Activated CD4-positive, alpha-beta memory T cell treated with anti-CD3 and anti-CD28 coated beads, Interleukin-2, amount 10 ng/mL, durations not matched to agents 7 days and 5 days (primary cell): ENCODE measurements at regions of chr11 and their contacts with region 1.

Region 1: GRCh38 chr11:3014057-3014938 is 22.2 kb upstream of the NAP1L4 start:
- DNase-seq: peak; percentile 87
- H3K4me3 Mint-ChIP-seq: peak overlapping the region; percentile 11
- H3K27ac Mint-ChIP-seq: peak overlapping the region; percentile 95
- H3K4me1 Mint-ChIP-seq: peaks cover 84% of the 10 kb centered on the region
- H3K27me3 Mint-ChIP-seq: no peaks in the 10 kb centered on the region

Region 2: GRCh38 chr11:2930704-2931428 is 83.4 kb before region 1 on chr11:
- CTCF ChIA-PET with region 1: interaction called, 12 read pairs
- POLR2A ChIA-PET with region 1: no interaction called
- DNase-seq: peak; percentile 66
- H3K4me3 Mint-ChIP-seq: peak overlapping the region; percentile 73
- H3K27ac Mint-ChIP-seq: peak overlapping the region; percentile 57
- H3K4me1 Mint-ChIP-seq: peaks cover 43% of the 10 kb centered on the region
- H3K27me3 Mint-ChIP-seq: peaks cover 22% of the 10 kb centered on the region

Region 3: DNA sequence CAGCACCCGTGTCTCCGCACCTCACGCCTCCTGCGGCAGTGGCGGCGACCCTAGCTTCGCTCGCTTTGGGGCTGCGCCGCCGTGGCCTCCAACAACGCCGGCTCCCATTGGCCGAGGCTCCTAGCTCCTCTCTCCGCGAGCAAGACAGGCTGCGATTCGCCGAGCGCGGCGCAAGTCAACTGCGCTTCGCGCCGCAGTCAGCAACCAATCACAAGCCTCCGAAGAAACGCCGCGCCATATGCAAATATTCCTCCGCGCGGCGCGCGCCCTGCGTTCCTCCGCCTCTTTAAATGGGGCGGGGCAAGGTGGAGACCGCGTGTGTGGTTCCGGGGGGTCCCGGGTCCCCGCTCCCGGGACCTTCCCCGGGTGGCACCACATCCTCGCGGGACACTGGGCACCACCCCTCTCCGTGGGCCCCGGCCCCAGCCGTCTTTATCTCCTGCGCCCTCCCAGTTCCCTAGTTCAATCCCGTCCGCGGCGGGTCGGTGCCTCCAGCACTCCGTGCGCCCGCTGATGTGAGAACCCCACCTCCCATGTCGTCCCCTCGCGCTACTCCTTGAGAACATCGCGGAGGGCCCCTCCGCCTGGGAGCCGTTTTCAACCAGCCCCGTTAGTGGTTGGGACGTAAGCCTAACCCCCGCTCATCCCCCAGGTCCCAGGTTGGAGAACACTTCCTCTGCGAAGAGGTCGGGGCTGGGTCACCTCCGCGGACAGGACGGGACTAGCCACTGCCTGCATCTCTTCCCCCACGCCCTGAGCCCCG is 21.9 kb before region 1 on chr11 and contains the start of gene NAP1L4:
- CTCF ChIA-PET with region 1: interaction called, 46 read pairs
- POLR2A ChIA-PET with region 1: interaction called, 307 read pairs
- DNase-seq: peak; percentile 97
- H3K4me3 Mint-ChIP-seq: peak within 1 kb of the TSS; percentile 99
- H3K27ac Mint-ChIP-seq: peak within 1 kb of the TSS; percentile 97
- H3K4me1 Mint-ChIP-seq: peaks cover 25% of the 10 kb centered on the region
- H3K27me3 Mint-ChIP-seq: no peaks in the 10 kb centered on the region
- total RNA-seq, gene NAP1L4: 299 to 314 TPM

Region 4: DNA sequence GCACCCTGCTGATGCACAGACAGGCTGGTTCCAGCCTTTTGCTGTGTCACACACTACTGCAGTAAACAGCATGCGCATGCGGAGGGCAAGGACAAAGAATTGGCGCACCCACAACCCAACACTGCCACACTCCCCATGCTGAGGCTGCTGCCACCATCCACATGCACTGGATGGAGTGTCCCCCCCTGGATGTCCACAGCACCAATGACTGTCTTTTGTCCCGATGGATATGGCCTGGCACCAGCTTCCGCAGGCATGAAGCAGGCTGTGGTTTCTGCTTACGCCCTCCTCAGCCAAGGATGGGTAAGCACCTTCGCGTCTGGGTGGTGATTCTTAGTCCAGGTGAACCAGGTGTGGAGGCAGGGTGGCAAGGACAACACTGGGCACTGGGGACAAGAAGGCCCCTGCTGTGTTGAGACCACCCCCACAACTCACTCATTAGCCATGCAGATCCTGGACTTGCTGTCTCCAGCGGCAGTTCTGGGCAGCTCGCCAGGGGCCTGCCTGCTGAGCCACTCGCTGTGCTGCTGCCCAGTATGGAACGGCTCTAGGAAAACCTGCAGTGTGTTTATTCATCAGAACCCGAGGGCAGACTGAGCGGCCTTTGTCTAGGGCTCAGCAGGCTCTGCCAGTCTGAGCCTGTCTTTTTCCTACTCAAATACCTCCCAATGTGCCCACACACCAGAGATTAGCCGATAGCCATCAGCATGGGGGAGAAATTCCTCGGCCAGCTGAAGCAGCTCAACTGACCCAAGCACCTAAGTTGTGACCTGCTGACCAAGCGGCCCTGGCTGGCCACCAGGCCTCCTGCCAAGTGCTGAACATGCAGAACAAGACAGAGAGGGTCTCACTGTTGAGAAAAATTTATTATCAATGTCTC is 14.0 kb before region 1 on chr11:
- CTCF ChIA-PET with region 1: interaction called, 11 read pairs
- POLR2A ChIA-PET with region 1: interaction called, 17 read pairs
- DNase-seq: no peak
- H3K4me3 Mint-ChIP-seq: no peak overlapping the region
- H3K27ac Mint-ChIP-seq: no peak overlapping the region
- H3K4me1 Mint-ChIP-seq: no peaks in the 10 kb centered on the region
- H3K27me3 Mint-ChIP-seq: no peaks in the 10 kb centered on the region

Region 5: DNA sequence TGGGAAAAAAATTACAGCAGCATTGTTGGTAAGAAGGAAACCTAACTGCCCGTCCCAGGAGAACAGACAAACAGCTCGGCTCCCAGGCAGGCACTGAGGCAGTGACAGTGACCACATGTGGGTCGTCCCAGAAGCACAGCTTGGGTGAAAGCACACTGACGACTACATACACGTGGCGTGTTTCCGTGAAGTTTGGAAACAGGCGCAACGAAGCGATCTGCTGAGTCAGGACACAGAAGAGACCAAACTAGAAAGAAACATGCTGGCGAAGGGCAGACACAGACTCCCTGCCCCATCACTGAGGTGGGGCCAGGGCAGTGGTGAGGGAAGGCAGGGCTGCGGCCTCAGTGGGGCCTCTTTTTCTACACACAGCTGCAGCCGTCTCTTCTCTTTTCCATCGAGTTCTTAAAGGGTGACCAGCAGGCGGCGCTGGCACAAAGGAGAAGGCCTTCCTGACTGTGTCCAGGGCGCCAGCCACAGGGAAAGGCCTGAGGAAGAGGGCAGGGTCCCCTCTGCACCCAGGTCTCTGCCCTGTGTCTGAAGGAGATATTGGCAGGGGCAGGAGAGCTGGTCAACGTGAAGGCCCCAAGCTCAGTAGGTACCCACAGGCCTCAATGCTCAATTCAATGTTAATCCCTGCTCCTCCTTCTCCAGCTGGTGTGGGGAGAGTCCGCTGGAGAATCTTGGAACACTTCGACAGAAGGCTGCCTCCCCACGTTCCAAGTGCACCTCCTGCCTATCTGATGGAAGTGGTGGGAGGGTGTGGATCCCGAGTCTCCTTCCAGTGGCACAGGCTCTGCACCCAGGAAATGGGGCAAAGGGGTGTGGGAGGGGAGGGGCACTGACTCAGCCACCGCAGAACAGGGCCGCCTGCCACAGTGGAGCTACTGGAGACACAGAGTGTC is 23.0 kb after region 1 on chr11:
- CTCF ChIA-PET with region 1: interaction called, 21 read pairs
- POLR2A ChIA-PET with region 1: interaction called, 7 read pairs
- DNase-seq: peak; percentile 68
- H3K4me3 Mint-ChIP-seq: no peak overlapping the region
- H3K27ac Mint-ChIP-seq: peak overlapping the region; percentile 55
- H3K4me1 Mint-ChIP-seq: peaks cover 47% of the 10 kb centered on the region
- H3K27me3 Mint-ChIP-seq: no peaks in the 10 kb centered on the region

Region 6: GRCh38 chr11:3049430-3050243 is 35.3 kb after region 1 on chr11:
- CTCF ChIA-PET with region 1: interaction called, 4 read pairs
- POLR2A ChIA-PET with region 1: interaction called, 15 read pairs
- DNase-seq: peak; percentile 88
- H3K4me3 Mint-ChIP-seq: peak overlapping the region; percentile 61
- H3K27ac Mint-ChIP-seq: peak overlapping the region; percentile 95
- H3K4me1 Mint-ChIP-seq: peaks cover 49% of the 10 kb centered on the region
- H3K27me3 Mint-ChIP-seq: no peaks in the 10 kb centered on the region

Region 7: DNA sequence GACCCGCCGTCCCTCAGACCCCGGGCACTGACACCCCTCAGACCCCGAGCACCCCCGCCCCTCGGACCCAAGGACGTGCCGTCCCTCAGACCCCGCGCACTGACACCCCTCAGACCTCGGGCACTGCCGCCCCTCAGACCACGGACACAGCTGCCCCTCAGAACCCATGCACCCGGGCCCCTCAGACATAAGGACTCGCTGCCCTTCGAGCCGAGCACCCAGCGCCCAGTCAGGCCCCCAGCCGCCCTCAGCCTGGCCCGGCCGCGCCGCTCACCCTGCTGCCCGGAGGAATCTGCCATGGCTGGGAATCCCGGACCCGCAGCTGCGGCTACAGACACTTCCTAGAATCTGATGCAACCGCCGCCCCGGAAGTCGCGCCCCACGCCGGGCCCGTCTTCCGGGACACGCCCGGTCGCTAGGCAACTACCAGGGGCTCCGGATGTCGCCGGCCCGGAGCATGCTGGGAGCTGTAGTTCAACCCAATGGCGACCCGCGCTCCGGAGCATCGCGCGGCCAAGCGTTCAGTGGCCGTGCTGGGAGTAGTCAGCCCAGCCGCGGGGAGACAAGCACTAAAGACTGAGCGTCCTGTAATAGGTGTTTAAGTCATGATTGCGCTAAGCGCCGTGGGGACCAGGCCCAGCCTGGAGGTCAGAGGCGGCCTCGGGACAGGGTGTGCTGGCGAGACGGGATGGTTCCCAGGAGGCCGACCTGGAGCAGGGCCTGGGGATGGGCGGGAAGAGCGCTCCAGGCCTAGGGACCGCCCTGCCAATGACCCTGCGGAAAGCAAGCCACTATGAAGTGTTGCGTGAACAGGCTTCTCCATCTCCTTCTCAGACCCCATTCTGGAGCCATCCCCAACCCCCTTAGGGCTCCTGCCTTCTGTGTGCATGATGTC is 43.0 kb after region 1 on chr11 and contains the start of gene CARS1:
- CTCF ChIA-PET with region 1: interaction called, 3 read pairs
- POLR2A ChIA-PET with region 1: interaction called, 14 read pairs
- DNase-seq: peak; percentile 96
- H3K4me3 Mint-ChIP-seq: peak within 1 kb of the TSS; percentile 81
- H3K27ac Mint-ChIP-seq: peak within 1 kb of the TSS; percentile 83
- H3K4me1 Mint-ChIP-seq: peaks cover 47% of the 10 kb centered on the region
- H3K27me3 Mint-ChIP-seq: peaks cover 4% of the 10 kb centered on the region
- total RNA-seq, gene CARS1: 106 to 121 TPM